Caco-2 (cell line): ENCODE measurements at regions of chr11 and their contacts with region 1.

Region 1: DNA sequence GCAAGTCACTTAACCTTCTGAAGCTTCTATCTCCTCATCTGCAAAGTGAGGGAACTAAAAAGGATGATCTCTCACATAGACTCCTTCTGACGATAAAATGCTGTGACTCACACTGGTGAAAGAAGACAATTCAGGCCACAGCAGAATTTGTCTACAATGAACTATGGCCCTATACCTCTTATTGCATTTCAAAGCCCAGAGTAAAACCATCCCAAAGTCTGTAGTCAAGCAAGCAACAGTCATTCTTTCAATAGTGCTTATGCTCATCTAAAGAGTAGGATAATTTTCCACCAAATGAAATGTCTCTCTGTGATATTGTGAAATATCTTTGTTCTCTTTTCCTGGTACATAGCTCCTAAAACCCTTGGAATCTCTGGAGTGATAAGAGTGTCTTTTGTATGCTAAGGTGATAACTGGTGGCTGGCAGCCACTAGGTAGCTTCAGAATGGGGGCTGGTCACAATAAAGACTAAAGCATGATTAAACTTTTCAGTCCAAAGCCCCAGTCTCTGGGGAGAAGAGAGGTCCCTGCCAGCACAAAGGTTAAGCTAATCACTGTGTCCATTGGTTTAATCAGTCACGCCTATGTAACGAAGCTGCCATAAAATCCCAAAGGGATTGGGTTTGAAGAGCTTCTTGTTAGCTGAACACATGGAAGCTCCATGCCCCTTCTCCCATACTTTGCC is 30.8 kb downstream of the SYTL2 start:
- DNase-seq: peak; percentile 79 to 89
- H3K4me3 ChIP-seq: no peak overlapping the region
- H3K4me3 Mint-ChIP-seq: peak overlapping the region; percentile 44
- H3K27ac Mint-ChIP-seq: peak overlapping the region; percentile 74
- H3K4me1 ChIP-seq: peaks cover 65% of the 10 kb centered on the region
- H3K4me1 Mint-ChIP-seq: peaks cover 64% of the 10 kb centered on the region
- H3K27me3 ChIP-seq: no peaks in the 10 kb centered on the region
- H3K27me3 Mint-ChIP-seq: no peaks in the 10 kb centered on the region
- CTCF ChIP-seq: no peak

Region 2: GRCh38 chr11:85742873-85743275 is 37.2 kb before region 1 on chr11:
- CTCF ChIA-PET with region 1: no interaction called
- POLR2A ChIA-PET with region 1: no interaction called
- intact Hi-C with region 1: loop called (anchors 2 kb)
- DNase-seq: no peak
- H3K4me3 ChIP-seq: no peak overlapping the region
- H3K4me3 Mint-ChIP-seq: peak overlapping the region; percentile 15
- H3K27ac Mint-ChIP-seq: peak overlapping the region; percentile 56
- H3K4me1 ChIP-seq: peaks cover 30% of the 10 kb centered on the region
- H3K4me1 Mint-ChIP-seq: peaks cover 44% of the 10 kb centered on the region
- H3K27me3 ChIP-seq: no peaks in the 10 kb centered on the region
- H3K27me3 Mint-ChIP-seq: no peaks in the 10 kb centered on the region
- CTCF ChIP-seq: no peak

Region 3: DNA sequence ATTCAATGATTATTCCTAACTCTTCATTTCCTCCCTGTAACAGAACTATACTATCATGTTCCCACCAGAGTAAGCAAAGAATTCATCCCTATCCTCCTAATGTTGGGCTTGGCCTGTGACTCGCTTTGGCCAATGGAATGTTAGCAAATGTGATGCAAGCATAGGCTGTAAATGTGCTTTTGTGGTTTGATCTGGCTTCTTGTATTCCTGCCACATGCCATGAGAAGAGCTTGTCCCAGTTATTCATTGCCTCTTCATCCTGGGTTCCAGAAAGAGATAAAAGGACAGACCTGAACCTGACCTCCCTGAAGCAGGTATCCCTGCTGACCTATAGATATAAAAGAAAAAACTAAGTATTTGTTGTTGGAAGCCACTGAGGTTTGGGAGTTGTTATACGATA is 20.2 kb before region 1 on chr11:
- CTCF ChIA-PET with region 1: interaction called, 4 read pairs
- POLR2A ChIA-PET with region 1: no interaction called
- intact Hi-C with region 1: loop called (anchors 2 kb)
- DNase-seq: peak in 1 of 2 experiments; percentile 47
- H3K4me3 ChIP-seq: no peak overlapping the region
- H3K4me3 Mint-ChIP-seq: no peak overlapping the region
- H3K27ac Mint-ChIP-seq: peak overlapping the region; percentile 43
- H3K4me1 ChIP-seq: peaks cover 8% of the 10 kb centered on the region
- H3K4me1 Mint-ChIP-seq: peaks cover 35% of the 10 kb centered on the region
- H3K27me3 ChIP-seq: no peaks in the 10 kb centered on the region
- H3K27me3 Mint-ChIP-seq: no peaks in the 10 kb centered on the region
- CTCF ChIP-seq: no peak

Region 4: GRCh38 chr11:85800595-85801342 is 20.7 kb after region 1 on chr11:
- CTCF ChIA-PET with region 1: interaction called, 15 read pairs
- POLR2A ChIA-PET with region 1: interaction called, 3 read pairs
- intact Hi-C with region 1: loop called (anchors 1 kb)
- DNase-seq: no peak
- H3K4me3 ChIP-seq: no peak overlapping the region
- H3K4me3 Mint-ChIP-seq: no peak overlapping the region
- H3K27ac Mint-ChIP-seq: peak overlapping the region; percentile 85
- H3K4me1 ChIP-seq: peaks cover 66% of the 10 kb centered on the region
- H3K4me1 Mint-ChIP-seq: peaks cover 71% of the 10 kb centered on the region
- H3K27me3 ChIP-seq: no peaks in the 10 kb centered on the region
- H3K27me3 Mint-ChIP-seq: no peaks in the 10 kb centered on the region
- CTCF ChIP-seq: no peak